ENCODE measurements at regions of chr14 and their contacts with region 1.

Region 1: GRCh38 chr14:35159742-35160409 is 37.5 kb downstream of the PRORP start:
- DNase-seq: peak in 2 of 9 experiments; percentile 18 to 39
- ATAC-seq: no peak
- H3K4me3 ChIP-seq: no peak overlapping the region
- H3K4me3 Mint-ChIP-seq: no peak overlapping the region
- H3K27ac ChIP-seq: no peak overlapping the region
- H3K27ac Mint-ChIP-seq: peak overlapping the region; percentile 29
- H3K4me1 ChIP-seq: peaks cover 10% of the 10 kb centered on the region
- H3K4me1 Mint-ChIP-seq: peaks cover 43% of the 10 kb centered on the region
- H3K27me3 ChIP-seq: no peaks in the 10 kb centered on the region
- H3K27me3 Mint-ChIP-seq: no peaks in the 10 kb centered on the region
- CTCF ChIP-seq: no peak

Region 2: DNA sequence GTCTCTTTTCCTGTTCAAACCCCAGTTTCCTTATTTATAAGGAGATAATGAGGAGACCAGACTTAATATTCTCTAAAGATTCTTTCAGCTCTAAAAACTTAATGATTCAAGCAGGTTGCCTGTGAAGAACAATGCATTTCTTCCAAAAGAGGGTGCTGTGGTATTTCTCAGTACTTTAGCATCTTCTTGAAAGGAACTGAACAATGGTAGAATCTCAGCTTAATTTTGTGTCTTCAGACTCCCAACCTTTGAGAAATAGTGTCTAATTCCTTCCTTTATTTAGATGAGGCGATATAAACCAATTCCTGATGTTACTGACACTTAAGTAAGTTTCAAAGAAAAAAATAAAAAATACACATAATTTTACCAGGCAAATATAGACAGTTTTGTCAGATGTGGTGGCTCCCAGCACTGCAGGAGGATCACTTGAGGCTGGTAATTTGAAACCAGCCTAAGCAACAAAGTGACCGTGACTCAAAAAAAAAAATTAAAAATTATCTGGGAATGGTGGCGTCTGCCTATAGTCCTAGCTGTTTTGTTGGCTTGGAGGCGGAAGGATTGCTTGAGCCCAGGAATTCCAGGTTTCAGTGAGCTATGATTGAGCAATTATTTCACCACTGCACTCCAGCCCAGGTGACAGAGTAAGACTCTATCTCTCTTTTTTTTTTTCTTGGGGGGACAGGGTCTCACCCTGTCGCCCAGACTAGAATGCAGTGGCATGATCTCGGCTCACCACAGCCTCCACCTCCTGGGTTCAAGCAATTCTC is 55.4 kb after region 1 on chr14:
- CTCF ChIA-PET with region 1: no interaction called
- POLR2A ChIA-PET with region 1: no interaction called
- intact Hi-C with region 1: loop called in 1 of 2 experiments (anchors 5 kb)
- DNase-seq: peak in 2 of 9 experiments; percentile 39 to 53
- ATAC-seq: no peak
- H3K4me3 ChIP-seq: no peak overlapping the region
- H3K4me3 Mint-ChIP-seq: no peak overlapping the region
- H3K27ac ChIP-seq: no peak overlapping the region
- H3K27ac Mint-ChIP-seq: peak overlapping the region; percentile 13
- H3K4me1 ChIP-seq: no peaks in the 10 kb centered on the region
- H3K4me1 Mint-ChIP-seq: peaks cover 7% of the 10 kb centered on the region
- H3K27me3 ChIP-seq: no peaks in the 10 kb centered on the region
- H3K27me3 Mint-ChIP-seq: no peaks in the 10 kb centered on the region
- CTCF ChIP-seq: no peak

Measured in CD8-positive, alpha-beta T cell (primary cell).